CD8-positive, alpha-beta T cell (primary cell): ENCODE measurements at regions of chr5 and their contacts with region 1.

Region 1: DNA sequence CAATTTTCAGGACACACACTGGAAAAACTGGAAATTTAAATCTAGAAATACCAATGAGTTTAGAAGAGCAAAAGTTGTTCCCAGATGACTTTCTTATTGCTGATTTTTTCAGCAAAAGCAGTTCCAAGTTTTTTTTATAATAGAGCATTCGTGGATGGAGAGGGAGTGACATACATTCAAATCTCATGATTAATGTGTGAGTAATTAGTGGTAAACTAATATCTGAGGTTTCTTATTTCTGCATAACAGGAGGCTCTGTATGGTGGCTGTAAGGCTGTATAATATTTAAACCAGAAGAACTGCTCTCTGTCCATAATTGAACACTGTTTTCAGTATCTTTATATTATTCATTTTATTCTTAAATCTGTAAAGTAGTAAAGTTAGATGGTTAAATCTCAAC is 25.8 kb downstream of the LYSMD3 start:
- DNase-seq: no peak
- ATAC-seq: no peak
- H3K4me3 ChIP-seq: no peak overlapping the region
- H3K4me3 Mint-ChIP-seq: no peak overlapping the region
- H3K27ac ChIP-seq: no peak overlapping the region
- H3K27ac Mint-ChIP-seq: no peak overlapping the region
- H3K4me1 ChIP-seq: no peaks in the 10 kb centered on the region
- H3K4me1 Mint-ChIP-seq: no peaks in the 10 kb centered on the region
- H3K27me3 ChIP-seq: no peaks in the 10 kb centered on the region
- H3K27me3 Mint-ChIP-seq: no peaks in the 10 kb centered on the region
- CTCF ChIP-seq: no peak

Region 2: DNA sequence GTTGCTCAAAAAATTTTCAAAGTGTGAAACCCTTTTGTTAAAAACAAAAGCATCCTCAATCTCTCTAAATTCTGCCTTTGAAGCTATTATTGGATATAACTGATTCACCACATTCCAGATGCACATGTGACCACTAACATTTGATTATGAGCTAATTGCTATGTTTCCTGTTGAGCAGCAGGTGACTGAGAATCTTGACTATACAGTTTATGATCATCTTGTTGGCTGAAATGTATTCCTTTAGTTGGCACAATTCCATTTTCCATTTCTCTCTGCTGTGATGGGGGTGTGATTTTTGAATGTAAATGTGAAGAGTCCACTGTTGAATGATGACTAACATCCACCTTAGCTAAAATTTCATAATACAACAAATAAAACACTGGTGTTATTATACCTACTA is 15.1 kb after region 1 on chr5:
- CTCF ChIA-PET with region 1: interaction called, 3 read pairs
- POLR2A ChIA-PET with region 1: interaction called, 3 read pairs
- intact Hi-C with region 1: loop called in 1 of 2 experiments (anchors 2 kb)
- DNase-seq: no peak
- ATAC-seq: no peak
- H3K4me3 ChIP-seq: no peak overlapping the region
- H3K4me3 Mint-ChIP-seq: no peak overlapping the region
- H3K27ac ChIP-seq: no peak overlapping the region
- H3K27ac Mint-ChIP-seq: no peak overlapping the region
- H3K4me1 ChIP-seq: no peaks in the 10 kb centered on the region
- H3K4me1 Mint-ChIP-seq: peaks cover 19% of the 10 kb centered on the region
- H3K27me3 ChIP-seq: no peaks in the 10 kb centered on the region
- H3K27me3 Mint-ChIP-seq: no peaks in the 10 kb centered on the region
- CTCF ChIP-seq: no peak